ENCODE measurements at regions of chr5 and their contacts with region 1.

Region 1: GRCh38 chr5:159106569-159107282 is 7.0 kb upstream of the EBF1 start:
- DNase-seq: peak; percentile 89

Region 2: DNA sequence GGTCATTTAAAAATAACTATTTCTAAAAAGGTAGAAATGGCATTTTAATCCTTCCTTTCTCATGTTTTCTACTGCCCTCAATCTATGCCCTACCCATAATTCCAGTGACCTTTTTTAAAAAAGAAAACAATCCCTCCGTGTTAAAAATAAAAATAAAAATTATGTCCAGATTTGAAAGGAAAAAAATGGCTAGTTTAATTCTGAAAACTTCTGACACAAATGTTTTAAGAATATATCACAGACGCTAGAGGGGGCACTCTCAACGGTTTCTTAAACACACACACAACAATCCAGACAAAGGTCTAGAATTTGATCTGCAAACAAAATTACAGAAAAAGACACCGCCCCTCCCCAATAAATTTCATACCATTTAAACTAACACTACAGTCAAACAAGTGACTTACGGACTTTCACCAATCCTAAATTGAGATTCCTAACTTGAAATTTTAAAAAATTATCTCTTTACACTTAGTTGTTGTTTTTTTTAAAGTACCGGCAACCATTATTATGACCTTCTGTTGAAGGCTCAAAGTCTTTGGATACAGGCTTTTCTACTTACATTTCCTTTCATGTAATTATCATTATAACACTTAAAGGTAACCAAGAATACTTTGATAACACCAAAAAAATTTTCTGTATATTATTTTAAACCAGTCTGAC is 1286.0 kb before region 1 on chr5:
- intact Hi-C with region 1: loop called (anchors 10 kb)
- DNase-seq: no peak

Region 3: GRCh38 chr5:158074992-158075769 is 1031.5 kb before region 1 on chr5:
- intact Hi-C with region 1: loop called (anchors 5 kb)
- DNase-seq: no peak

Region 4: GRCh38 chr5:158423623-158424200 is 683.0 kb before region 1 on chr5:
- intact Hi-C with region 1: loop called (anchors 10 kb)
- DNase-seq: no peak

Region 5: GRCh38 chr5:158725297-158725851 is 381.4 kb before region 1 on chr5:
- intact Hi-C with region 1: no loop called
- DNase-seq: no peak

Region 6: GRCh38 chr5:158770506-158770905 is 336.2 kb before region 1 on chr5:
- intact Hi-C with region 1: loop called (anchors 10 kb)
- DNase-seq: no peak

Measured in cardiac septum (tissue), 1 donor.